Right cardiac atrium (tissue), 5 donors: ENCODE measurements at regions of chr22 and their contacts with region 1.

Region 1: DNA sequence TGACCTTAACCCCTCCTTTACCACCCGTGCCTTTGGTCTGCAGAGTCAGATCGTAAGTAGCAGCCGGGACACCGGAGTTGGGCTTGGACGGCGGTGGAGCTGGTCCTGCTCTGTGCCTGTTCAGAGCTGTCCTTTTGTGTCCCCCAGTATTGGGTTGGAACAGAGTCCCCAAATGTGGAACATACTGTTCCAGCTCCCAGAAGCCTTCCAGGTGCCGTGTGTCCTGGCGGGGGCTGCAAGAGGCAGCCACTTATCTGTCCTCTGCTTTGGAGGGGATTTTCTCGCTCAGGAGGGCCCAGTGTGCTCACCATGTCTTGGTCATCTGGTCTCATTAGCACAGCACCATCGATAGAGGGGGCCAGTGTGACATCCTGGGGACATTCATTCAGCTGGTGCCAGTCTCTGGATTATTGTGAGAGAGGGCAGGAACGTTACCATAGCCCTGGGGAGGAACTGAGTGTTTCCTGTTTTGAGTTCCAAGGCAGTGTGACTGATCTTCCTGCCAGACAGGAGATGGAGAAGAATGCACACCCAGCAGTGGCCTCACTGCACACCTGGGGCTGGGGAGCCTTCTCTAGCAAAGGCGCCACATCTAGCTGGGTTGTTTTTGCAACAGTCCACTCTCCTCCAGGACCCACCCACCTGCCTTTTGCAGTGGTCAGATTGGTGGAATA is 12.4 kb downstream of the CRELD2 start:
- DNase-seq: peak in 2 of 3 donors; percentile 62 to 78
- ATAC-seq: peak; percentile 38 to 47
- H3K4me3 ChIP-seq: no peak overlapping the region
- H3K27ac ChIP-seq: peak overlapping the region; percentile 14
- H3K4me1 ChIP-seq: peaks cover 11% of the 10 kb centered on the region
- H3K27me3 ChIP-seq: no peaks in the 10 kb centered on the region

Region 2: DNA sequence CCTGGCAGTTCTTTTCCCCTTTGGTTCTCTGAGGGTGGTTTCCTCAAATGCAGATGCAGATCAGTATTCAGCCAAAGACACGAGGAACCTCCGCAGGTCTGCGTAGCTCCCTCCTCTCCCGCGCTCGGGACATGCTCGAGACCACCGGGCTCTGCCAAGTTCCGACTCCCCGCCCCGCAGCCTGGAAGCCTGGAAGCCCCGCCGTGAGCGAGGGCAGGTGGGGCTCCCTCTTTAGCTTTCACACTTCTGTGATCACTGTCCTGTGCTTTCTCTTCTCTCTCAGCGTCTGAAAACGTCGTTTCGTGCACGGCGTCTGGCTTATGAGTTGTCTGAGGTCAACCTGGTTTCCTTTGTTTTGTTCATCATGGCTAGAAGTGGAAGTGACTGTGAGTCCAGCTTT is 50.6 kb before region 1 on chr22:
- intact Hi-C with region 1: no loop called
- DNase-seq: no peak
- ATAC-seq: peak in 1 of 2 donors; percentile 13
- H3K4me3 ChIP-seq: no peak overlapping the region
- H3K27ac ChIP-seq: no peak overlapping the region
- H3K4me1 ChIP-seq: peaks cover 2% of the 10 kb centered on the region
- H3K27me3 ChIP-seq: no peaks in the 10 kb centered on the region

Region 3: GRCh38 chr22:49970528-49971231 is 39.8 kb after region 1 on chr22:
- intact Hi-C with region 1: loop called in 2 of 4 experiments (anchors 5 kb)
- DNase-seq: peak; percentile 96 to 98 (median 97)
- ATAC-seq: peak; percentile 86 to 93
- H3K4me3 ChIP-seq: peak overlapping the region; percentile 38
- H3K27ac ChIP-seq: peak overlapping the region; percentile 71
- H3K4me1 ChIP-seq: peaks cover 14% of the 10 kb centered on the region
- H3K27me3 ChIP-seq: no peaks in the 10 kb centered on the region

Region 4: GRCh38 chr22:49992921-49993648 is 62.2 kb after region 1 on chr22:
- intact Hi-C with region 1: loop called in 2 of 4 experiments (anchors 5 kb)
- DNase-seq: peak; percentile 67 to 89 (median 85)
- ATAC-seq: peak; percentile 72 to 77
- H3K4me3 ChIP-seq: no peak overlapping the region
- H3K27ac ChIP-seq: no peak overlapping the region
- H3K4me1 ChIP-seq: no peaks in the 10 kb centered on the region
- H3K27me3 ChIP-seq: no peaks in the 10 kb centered on the region

Region 5: GRCh38 chr22:50030297-50031188 is 99.7 kb after region 1 on chr22:
- intact Hi-C with region 1: loop called (anchors 1 to 5 kb)
- DNase-seq: peak; percentile 74 to 89 (median 88)
- ATAC-seq: peak; percentile 85 to 87
- H3K4me3 ChIP-seq: no peak overlapping the region
- H3K27ac ChIP-seq: no peak overlapping the region
- H3K4me1 ChIP-seq: no peaks in the 10 kb centered on the region
- H3K27me3 ChIP-seq: no peaks in the 10 kb centered on the region